ENCODE measurements at regions of chr4 and their contacts with region 1.

Region 1: GRCh38 chr4:56799824-56800756 is 21.4 kb downstream of the SPINK2 start:
- DNase-seq: peak; percentile 75 to 82 (median 82)
- H3K4me3 ChIP-seq: peak overlapping the region; percentile 72 to 75
- H3K4me3 Mint-ChIP-seq: peak overlapping the region; percentile 91 to 100 (median 94)
- H3K27ac ChIP-seq: peak overlapping the region; percentile 59
- H3K27ac Mint-ChIP-seq: peak overlapping the region; percentile 55 to 97 (median 91)
- H3K4me1 ChIP-seq: peaks cover 18% of the 10 kb centered on the region
- H3K4me1 Mint-ChIP-seq: peaks cover 8 to 29% (median 17%) of the 10 kb centered on the region in 4 donors
- H3K27me3 ChIP-seq: no peaks in the 10 kb centered on the region
- H3K27me3 Mint-ChIP-seq: peaks cover 0 to 3% of the 10 kb centered on the region in 2 donors

Region 2: GRCh38 chr4:56424697-56425514 is 375.2 kb before region 1 on chr4:
- CTCF ChIA-PET with region 1: interaction called, 24 read pairs
- POLR2A ChIA-PET with region 1: no interaction called
- intact Hi-C with region 1: loop called (anchors 1 kb)
- DNase-seq: peak in 4 of 5 donors; percentile 45 to 54 (median 48)
- H3K4me3 ChIP-seq: no peak overlapping the region
- H3K4me3 Mint-ChIP-seq: no peak overlapping the region
- H3K27ac ChIP-seq: no peak overlapping the region
- H3K27ac Mint-ChIP-seq: no peak overlapping the region
- H3K4me1 ChIP-seq: no peaks in the 10 kb centered on the region
- H3K4me1 Mint-ChIP-seq: peaks cover 0 to 7% (median 4%) of the 10 kb centered on the region in 4 donors
- H3K27me3 ChIP-seq: no peaks in the 10 kb centered on the region
- H3K27me3 Mint-ChIP-seq: no peaks in the 10 kb centered on the region

Region 3: DNA sequence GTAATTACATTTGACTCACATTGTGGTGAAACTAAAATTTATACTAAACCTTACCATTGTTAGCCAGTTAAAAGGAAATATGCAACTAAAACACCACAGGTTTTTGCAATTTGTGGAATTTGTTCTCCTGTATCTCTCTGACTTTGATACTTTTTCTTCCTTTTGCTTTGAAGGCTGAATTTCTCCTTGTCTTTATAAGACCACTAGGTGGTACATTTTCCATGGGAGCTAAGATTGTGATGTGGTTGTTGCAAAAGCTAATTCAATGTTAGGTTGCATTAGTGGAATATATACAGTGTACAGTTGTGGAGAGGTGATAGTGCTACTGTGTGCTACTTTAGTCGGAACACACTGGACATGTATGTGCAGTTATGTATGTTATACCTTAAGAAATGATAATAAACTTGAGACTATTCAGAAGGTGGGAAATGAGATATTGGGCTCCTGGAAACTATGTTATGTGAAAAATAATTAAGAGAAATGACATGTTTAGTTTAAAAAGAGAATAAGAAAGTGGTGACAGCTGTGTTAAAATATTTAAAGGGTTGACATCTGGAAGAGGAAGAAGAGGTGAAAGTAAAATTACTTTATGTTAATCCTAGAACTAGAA is 224.2 kb before region 1 on chr4:
- CTCF ChIA-PET with region 1: interaction called, 43 read pairs
- POLR2A ChIA-PET with region 1: interaction called, 6 read pairs
- intact Hi-C with region 1: loop called (anchors 1 kb)
- DNase-seq: peak in 4 of 5 donors; percentile 10 to 23 (median 13)
- H3K4me3 ChIP-seq: no peak overlapping the region
- H3K4me3 Mint-ChIP-seq: no peak overlapping the region
- H3K27ac ChIP-seq: no peak overlapping the region
- H3K27ac Mint-ChIP-seq: no peak overlapping the region
- H3K4me1 ChIP-seq: no peaks in the 10 kb centered on the region
- H3K4me1 Mint-ChIP-seq: peaks cover 0 to 2% (median 0%) of the 10 kb centered on the region in 4 donors
- H3K27me3 ChIP-seq: no peaks in the 10 kb centered on the region
- H3K27me3 Mint-ChIP-seq: peaks cover 7 to 8% of the 10 kb centered on the region in 2 donors

Region 4: DNA sequence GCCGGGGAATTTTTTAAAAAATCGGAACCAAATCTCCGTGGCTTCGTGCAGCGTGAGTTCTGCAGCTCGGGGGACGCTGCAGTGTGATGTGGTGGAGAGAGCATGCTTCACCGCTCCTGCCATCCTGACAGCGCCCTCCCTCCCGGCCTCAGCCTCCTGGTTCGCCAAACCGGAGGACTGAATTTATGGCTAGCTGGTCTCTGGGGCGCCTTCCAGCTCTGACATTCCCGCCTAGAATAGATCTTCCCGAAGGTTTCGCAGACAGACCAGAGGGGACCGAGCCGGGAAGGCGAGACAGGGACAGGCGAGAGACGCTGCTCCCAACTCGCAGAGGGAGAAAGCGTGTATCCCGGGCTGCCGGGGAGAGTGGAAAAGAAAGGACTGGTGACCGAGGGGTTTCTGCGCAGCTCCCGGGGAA is 144.9 kb before region 1 on chr4:
- CTCF ChIA-PET with region 1: interaction called, 5 read pairs
- POLR2A ChIA-PET with region 1: no interaction called
- intact Hi-C with region 1: loop called (anchors 5 kb)
- DNase-seq: peak in 2 of 5 donors; percentile 22 to 24
- H3K4me3 ChIP-seq: peak overlapping the region in 1 of 2 donors; percentile 51
- H3K4me3 Mint-ChIP-seq: peak overlapping the region; percentile 81 to 96 (median 92)
- H3K27ac ChIP-seq: peak overlapping the region; percentile 51
- H3K27ac Mint-ChIP-seq: peak overlapping the region; percentile 19 to 95 (median 72)
- H3K4me1 ChIP-seq: peaks cover 57% of the 10 kb centered on the region
- H3K4me1 Mint-ChIP-seq: peaks cover 39 to 78% (median 62%) of the 10 kb centered on the region in 4 donors
- H3K27me3 ChIP-seq: peaks cover 5% of the 10 kb centered on the region
- H3K27me3 Mint-ChIP-seq: peaks cover 6 to 13% of the 10 kb centered on the region in 2 donors

Region 5: DNA sequence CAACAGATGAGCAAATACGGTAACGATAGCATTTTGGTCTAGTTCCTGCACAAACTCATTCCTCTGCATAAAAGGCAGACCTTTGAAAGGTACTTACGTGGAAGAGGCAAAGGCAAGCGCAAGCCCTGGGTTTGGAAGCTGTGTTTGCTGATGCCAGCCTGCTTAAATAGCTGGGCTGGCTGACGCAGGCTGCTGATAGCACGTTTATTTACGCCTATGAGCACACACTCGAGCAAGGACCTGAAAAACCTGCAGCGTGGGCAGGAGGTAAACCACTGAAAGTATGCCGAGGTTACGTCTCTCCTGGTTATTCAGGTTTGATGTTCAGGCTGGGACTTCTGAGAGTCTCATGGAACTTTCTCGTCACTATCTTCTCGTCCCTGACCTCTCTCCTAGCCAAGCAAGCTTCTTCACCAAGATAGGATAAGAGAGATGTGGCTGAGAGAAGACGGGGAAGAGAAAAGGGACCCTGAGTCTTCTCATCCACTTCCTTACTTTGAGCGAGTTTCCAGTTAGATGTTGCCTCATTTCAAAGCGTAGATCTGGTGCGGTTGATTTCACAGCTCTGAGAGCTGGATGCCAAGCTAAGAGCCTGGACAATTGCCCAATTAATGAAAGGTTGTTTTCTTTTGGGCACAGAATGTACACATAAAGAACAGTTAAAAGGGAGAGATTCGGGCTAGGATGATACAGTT is 118.8 kb before region 1 on chr4 and contains the start of gene HOPX:
- CTCF ChIA-PET with region 1: no interaction called
- POLR2A ChIA-PET with region 1: no interaction called
- intact Hi-C with region 1: no loop called
- DNase-seq: peak in 4 of 5 donors; percentile 21 to 41 (median 36)
- H3K4me3 ChIP-seq: peak within 1 kb of the TSS in 1 of 2 donors; percentile 24
- H3K4me3 Mint-ChIP-seq: peak within 1 kb of the TSS; percentile 63 to 80 (median 72)
- H3K27ac ChIP-seq: no peak within 1 kb of the TSS
- H3K27ac Mint-ChIP-seq: peak within 1 kb of the TSS in 5 of 7 donors; percentile 15 to 84 (median 37)
- H3K4me1 ChIP-seq: peaks cover 9% of the 10 kb centered on the region
- H3K4me1 Mint-ChIP-seq: peaks cover 12 to 18% (median 14%) of the 10 kb centered on the region in 4 donors
- H3K27me3 ChIP-seq: no peaks in the 10 kb centered on the region
- H3K27me3 Mint-ChIP-seq: peaks cover 22 to 26% of the 10 kb centered on the region in 2 donors
- total RNA-seq, gene HOPX: 16.9 to 19.3 TPM

Region 6: DNA sequence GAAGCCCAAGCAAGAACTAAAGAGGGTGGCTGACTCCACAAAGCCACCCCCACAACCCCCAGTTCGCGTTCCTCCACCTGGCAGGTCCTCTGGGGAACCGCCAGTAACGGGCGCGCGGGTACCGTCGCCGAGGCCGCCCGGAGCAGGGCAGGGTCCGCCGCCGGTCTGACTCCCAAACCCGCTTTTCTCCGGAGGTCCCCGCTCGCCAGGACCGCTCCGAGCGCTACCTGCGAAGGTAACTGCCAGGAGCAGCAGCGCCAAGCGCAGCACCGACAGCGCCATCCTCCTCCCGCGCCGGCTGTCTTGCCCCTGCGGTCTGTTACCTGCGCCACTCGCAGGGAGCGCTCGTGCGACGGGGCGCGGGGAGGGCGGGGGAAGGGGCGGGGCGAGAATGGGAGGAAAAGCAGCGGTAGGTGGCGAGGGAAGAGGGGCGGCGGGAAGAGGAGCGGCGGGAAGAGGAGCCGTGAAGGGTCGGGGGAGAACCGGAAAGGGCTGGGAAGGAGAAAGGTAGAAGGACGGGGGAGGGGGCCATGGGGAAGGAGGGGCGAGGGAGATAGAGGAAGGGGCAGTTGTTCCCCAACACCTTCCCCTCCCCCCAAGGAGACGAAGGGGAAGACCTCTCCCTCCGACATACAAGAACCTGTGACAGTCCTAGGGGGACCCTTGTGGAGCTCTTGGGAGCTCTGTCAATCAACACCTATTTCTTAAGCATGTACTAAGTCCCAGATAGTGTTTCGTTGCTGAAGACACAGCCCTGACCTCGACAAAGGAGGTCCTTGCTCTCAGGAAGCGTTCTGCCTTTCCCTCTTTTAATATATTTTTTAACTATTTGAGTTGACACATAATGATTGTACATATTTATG is 21.5 kb after region 1 on chr4 and contains the start of gene SPINK2:
- CTCF ChIA-PET with region 1: interaction called, 8 read pairs
- POLR2A ChIA-PET with region 1: interaction called, 3 read pairs
- intact Hi-C with region 1: loop called (anchors 1 kb)
- DNase-seq: peak; percentile 62 to 75 (median 67)
- H3K4me3 ChIP-seq: peak within 1 kb of the TSS in 1 of 2 donors; percentile 53
- H3K4me3 Mint-ChIP-seq: peak within 1 kb of the TSS; percentile 76 to 83 (median 82)
- H3K27ac ChIP-seq: no peak within 1 kb of the TSS
- H3K27ac Mint-ChIP-seq: peak within 1 kb of the TSS in 6 of 7 donors; percentile 15 to 72 (median 52)
- H3K4me1 ChIP-seq: peaks cover 27% of the 10 kb centered on the region
- H3K4me1 Mint-ChIP-seq: peaks cover 14 to 35% (median 24%) of the 10 kb centered on the region in 4 donors
- H3K27me3 ChIP-seq: no peaks in the 10 kb centered on the region
- H3K27me3 Mint-ChIP-seq: peaks cover 0 to 2% of the 10 kb centered on the region in 2 donors
- total RNA-seq, gene SPINK2: 3.2 to 3.6 TPM